OCI-LY7 (cell line): ENCODE measurements at regions of chr11 and their contacts with region 1.

Region 1: DNA sequence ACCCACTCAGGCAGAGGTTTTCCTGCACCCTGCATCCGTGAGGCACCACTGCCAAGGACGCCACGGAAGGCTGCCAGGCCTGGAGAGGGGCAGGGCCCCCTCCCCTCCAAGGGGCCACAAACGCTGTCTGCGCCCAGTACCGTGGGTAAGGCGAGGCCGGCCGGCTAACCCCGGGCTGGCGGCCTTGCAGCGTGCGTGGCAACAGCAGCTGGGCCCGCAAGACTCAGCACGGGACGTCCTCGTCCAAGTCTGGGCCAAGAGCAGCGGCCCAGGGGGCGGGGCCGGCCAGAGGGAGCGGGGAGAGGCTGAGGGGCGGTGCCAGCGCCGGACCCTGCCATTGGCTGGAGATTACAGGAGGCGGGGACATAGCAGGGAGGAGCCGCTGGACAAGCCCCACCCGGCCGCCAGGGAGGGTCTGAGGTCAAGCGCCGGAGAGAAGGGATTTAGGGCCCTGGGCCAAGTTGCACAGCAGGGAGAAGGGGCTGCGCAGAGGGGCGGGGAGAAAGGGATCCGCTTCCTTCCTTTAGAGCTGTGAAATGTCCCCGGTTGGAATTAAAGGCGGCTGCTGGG is 16.0 kb downstream of the SLC43A1 start:
- DNase-seq: no peak
- H3K4me3 ChIP-seq: no peak overlapping the region
- H3K27ac ChIP-seq: no peak overlapping the region
- H3K4me1 ChIP-seq: peaks cover under 1% of the 10 kb centered on the region
- CTCF ChIP-seq: no peak

Region 2: GRCh38 chr11:57515332-57516060 is 16.0 kb after region 1 on chr11 and contains the start of gene SLC43A1:
- CTCF ChIA-PET with region 1: interaction called, 25 read pairs
- POLR2A ChIA-PET with region 1: interaction called, 64 read pairs
- intact Hi-C with region 1: no loop called
- DNase-seq: peak; percentile 63
- H3K4me3 ChIP-seq: peak within 1 kb of the TSS; percentile 91
- H3K27ac ChIP-seq: peak within 1 kb of the TSS; percentile 65
- H3K4me1 ChIP-seq: peaks cover 43% of the 10 kb centered on the region
- CTCF ChIP-seq: 0 out of 2 replicates have a peak, but pooled peaks have one; percentile 31
- total RNA-seq, gene SLC43A1: 47.1 and 61.1 TPM in 2 replicates

Region 3: GRCh38 chr11:57588046-57588710 is 88.7 kb after region 1 on chr11:
- CTCF ChIA-PET with region 1: no interaction called
- POLR2A ChIA-PET with region 1: no interaction called
- intact Hi-C with region 1: no loop called
- DNase-seq: no peak
- H3K4me3 ChIP-seq: no peak overlapping the region
- H3K27ac ChIP-seq: no peak overlapping the region
- H3K4me1 ChIP-seq: peaks cover 7% of the 10 kb centered on the region
- CTCF ChIP-seq: no peak